Activated T-helper 1 cell treated with anti-CD3 and anti-CD28 coated beads, Interleukin-12 subunit alpha, Interleukin-12 subunit beta, Interleukin-2, Interleukin-4 antibody, amounts not matched to agents 30 ng/mL and 10 ng/mL and 1 ng/mL, durations not matched to agents 14 hours and 24 hours and 36 hours (primary cell): ENCODE measurements at regions of chr15 and their contacts with region 1.

Region 1: GRCh38 chr15:74781431-74782258 is at the start of gene CSK:
- DNase-seq: peak; percentile 78
- H3K4me3 Mint-ChIP-seq: peak within 1 kb of the TSS; percentile 96
- H3K27ac Mint-ChIP-seq: peak within 1 kb of the TSS; percentile 100
- H3K4me1 Mint-ChIP-seq: peaks cover 62% of the 10 kb centered on the region
- H3K27me3 Mint-ChIP-seq: no peaks in the 10 kb centered on the region
- total RNA-seq, gene CSK: 348 and 362 TPM in 2 replicates

Region 2: DNA sequence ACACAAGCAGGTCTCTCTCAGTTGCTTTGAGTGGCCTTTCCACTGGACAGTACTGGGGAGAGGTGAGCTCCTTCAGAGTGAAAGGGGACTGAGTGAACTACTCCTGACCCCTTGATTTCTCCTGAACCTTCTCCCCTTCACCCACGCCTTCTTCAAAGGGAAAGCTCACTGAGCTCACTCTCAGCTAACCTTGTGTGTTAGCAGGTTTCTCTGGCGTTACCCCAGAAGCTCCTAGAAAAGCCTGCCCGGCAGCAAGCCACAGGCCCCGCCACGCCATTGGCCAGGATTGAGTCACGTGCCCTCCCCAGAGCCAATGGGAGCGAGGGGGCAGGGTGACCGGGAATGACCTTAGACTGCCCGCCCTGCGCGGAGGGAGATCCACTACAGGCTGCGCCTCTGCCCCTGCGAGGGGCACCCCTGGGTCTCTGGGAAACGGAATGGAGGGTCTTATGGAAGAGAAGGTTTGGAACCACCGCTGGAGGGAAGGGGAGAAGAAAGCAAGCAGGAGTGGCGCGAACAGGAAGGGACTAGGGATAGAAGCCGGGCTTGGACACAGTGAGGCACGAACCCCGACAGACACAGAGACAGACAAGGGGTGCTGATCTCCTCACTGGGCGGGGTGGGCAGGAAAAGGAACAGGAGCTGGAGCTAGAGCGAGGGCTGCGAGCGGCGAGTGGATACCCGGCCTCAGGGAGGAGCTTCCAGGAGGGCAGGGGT is 183.4 kb before region 1 on chr15:
- intact Hi-C with region 1: no loop called
- DNase-seq: peak; percentile 87
- H3K4me3 Mint-ChIP-seq: peak overlapping the region; percentile 100
- H3K27ac Mint-ChIP-seq: peak overlapping the region; percentile 100
- H3K4me1 Mint-ChIP-seq: peaks cover 19% of the 10 kb centered on the region
- H3K27me3 Mint-ChIP-seq: no peaks in the 10 kb centered on the region

Region 3: GRCh38 chr15:74615508-74616365 is 165.9 kb before region 1 on chr15 and contains the start of gene CLK3:
- intact Hi-C with region 1: loop called (anchors 5 kb)
- DNase-seq: peak; percentile 94
- H3K4me3 Mint-ChIP-seq: peak within 1 kb of the TSS; percentile 93
- H3K27ac Mint-ChIP-seq: peak within 1 kb of the TSS; percentile 95
- H3K4me1 Mint-ChIP-seq: peaks cover 33% of the 10 kb centered on the region
- H3K27me3 Mint-ChIP-seq: peaks cover 5% of the 10 kb centered on the region
- total RNA-seq, gene CLK3: 103 and 107 TPM in 2 replicates

Region 4: DNA sequence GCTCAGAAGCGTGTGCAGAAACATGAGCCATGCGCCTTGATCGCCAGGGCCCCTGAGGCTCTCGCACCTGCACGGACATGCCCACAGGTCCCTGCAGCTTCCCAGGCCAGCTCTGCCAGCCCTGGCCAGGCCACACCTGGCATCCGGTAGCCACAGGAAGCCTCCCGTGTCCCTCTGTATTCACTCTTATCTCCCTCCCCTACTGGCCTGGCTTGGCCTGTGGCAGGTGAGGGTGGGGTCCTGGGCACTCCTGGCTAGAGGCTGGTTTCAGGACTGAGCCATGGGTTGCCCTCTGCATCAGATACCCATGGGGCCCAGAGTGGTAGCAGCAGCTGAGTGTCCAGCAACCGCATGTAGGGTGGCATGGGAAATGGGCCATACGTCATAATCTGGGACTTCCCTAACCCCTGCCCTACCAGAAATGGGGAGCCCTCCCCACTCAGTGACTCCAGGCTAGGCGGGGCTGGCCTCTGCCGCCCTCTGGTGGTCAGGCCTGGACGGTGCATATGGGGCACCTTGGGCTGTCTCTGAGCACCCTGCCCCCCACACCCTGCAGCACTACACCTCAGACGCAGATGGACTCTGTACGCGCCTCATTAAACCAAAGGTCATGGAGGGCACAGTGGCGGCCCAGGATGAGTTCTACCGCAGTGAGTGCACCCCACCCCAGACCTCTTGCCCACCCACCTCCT is 18.4 kb after region 1 on chr15:
- intact Hi-C with region 1: loop called (anchors 1 kb)
- DNase-seq: peak; percentile 82
- H3K4me3 Mint-ChIP-seq: peak overlapping the region; percentile 45
- H3K27ac Mint-ChIP-seq: peak overlapping the region; percentile 81
- H3K4me1 Mint-ChIP-seq: peaks cover 37% of the 10 kb centered on the region
- H3K27me3 Mint-ChIP-seq: no peaks in the 10 kb centered on the region

Region 5: GRCh38 chr15:74889883-74890664 is 108.4 kb after region 1 on chr15 and contains the start of gene MPI:
- intact Hi-C with region 1: loop called (anchors 5 kb)
- DNase-seq: peak; percentile 82
- H3K4me3 Mint-ChIP-seq: peak within 1 kb of the TSS; percentile 91
- H3K27ac Mint-ChIP-seq: peak within 1 kb of the TSS; percentile 92
- H3K4me1 Mint-ChIP-seq: peaks cover 47% of the 10 kb centered on the region
- H3K27me3 Mint-ChIP-seq: no peaks in the 10 kb centered on the region
- total RNA-seq, gene MPI: 57.7 and 62.8 TPM in 2 replicates

Region 6: DNA sequence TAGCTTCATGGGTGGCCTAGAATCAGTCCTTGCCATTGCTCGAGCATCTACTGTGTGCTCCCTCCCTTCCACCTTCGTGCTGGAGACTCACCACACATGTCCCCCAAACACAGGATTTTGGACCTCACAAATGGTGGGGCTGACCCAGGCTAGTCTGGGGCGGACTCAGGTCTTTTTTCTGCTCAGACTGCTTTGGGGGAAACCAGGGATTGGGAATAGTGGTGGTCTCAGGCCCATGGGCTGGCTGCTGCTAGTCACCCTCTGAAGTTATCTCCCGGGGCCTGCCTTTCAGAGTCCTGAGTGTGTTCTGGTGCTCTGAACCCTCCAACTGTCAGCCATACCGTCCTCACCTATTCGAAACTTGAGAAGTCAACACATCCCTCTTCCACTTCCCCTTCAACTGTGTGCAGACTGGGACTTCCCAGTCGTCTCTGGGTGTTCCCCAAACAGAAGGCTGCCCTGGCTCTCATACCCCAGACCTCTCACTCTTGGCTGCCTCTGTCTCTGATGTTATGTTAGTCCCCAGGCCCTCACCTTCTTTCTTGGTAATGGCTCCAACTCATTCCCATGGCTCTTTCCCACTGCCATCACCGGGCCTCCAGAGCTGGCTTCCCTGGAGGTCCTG is 287.8 kb after region 1 on chr15:
- intact Hi-C with region 1: loop called (anchors 2 kb)
- DNase-seq: peak; percentile 22
- H3K4me3 Mint-ChIP-seq: peak overlapping the region; percentile 46
- H3K27ac Mint-ChIP-seq: peak overlapping the region; percentile 82
- H3K4me1 Mint-ChIP-seq: peaks cover 88% of the 10 kb centered on the region
- H3K27me3 Mint-ChIP-seq: no peaks in the 10 kb centered on the region